Body of pancreas (tissue), 4 donors: ENCODE measurements at regions of chr18 and their contacts with region 1.

Region 1: DNA sequence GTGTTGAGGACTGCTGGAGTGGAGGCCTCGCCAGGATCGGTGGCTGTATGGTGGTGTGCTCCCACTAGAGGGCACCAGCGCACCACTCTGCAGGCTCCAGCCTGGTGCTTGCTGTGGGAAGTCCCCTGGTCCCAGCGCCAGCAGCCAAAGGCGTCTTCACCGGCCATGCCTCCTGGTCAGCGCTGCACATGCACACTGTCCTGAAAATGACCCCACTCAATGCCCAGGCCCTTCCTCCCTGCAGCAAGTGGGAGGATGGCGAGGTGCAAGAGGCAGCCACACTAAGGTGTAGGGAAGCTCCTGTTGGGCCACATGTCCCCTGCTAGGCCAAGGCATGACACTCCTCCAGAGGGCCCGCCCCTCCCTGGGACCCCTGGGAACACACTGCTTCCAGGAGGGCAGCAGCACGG is 136.5 kb downstream of the CTIF start:
- DNase-seq: peak; percentile 86 to 89 (median 87)
- ATAC-seq: peak; percentile 92
- H3K4me3 ChIP-seq: no peak overlapping the region
- H3K27ac ChIP-seq: no peak overlapping the region
- H3K4me1 ChIP-seq: peaks cover 4% of the 10 kb centered on the region
- H3K27me3 ChIP-seq: no peaks in the 10 kb centered on the region
- CTCF ChIP-seq: peak; percentile 81 to 95 (median 92)
- POLR2A ChIP-seq: no peak

Region 2: GRCh38 chr18:48161911-48162698 is 513.3 kb before region 1 on chr18:
- intact Hi-C with region 1: no loop called
- DNase-seq: peak in 2 of 4 donors; percentile 71 to 78
- ATAC-seq: peak; percentile 59
- H3K4me3 ChIP-seq: peak overlapping the region; percentile 12 to 42
- H3K27ac ChIP-seq: peak overlapping the region; percentile 79 to 88 (median 84)
- H3K4me1 ChIP-seq: peaks cover 40% of the 10 kb centered on the region
- H3K27me3 ChIP-seq: no peaks in the 10 kb centered on the region
- CTCF ChIP-seq: no peak
- POLR2A ChIP-seq: no peak

Region 3: GRCh38 chr18:49400398-49401072 is 725.2 kb after region 1 on chr18:
- intact Hi-C with region 1: loop called (anchors 10 kb)
- DNase-seq: peak in 1 of 4 donors; percentile 6
- ATAC-seq: peak; percentile 62
- H3K4me3 ChIP-seq: no peak overlapping the region
- H3K27ac ChIP-seq: peak overlapping the region in 3 of 4 donors; percentile 18 to 63 (median 48)
- H3K4me1 ChIP-seq: peaks cover 14% of the 10 kb centered on the region
- H3K27me3 ChIP-seq: no peaks in the 10 kb centered on the region
- CTCF ChIP-seq: no peak
- POLR2A ChIP-seq: no peak

Region 4: GRCh38 chr18:49878567-49879270 is 1203.4 kb after region 1 on chr18:
- intact Hi-C with region 1: no loop called
- DNase-seq: no peak
- ATAC-seq: no peak
- H3K4me3 ChIP-seq: no peak overlapping the region
- H3K27ac ChIP-seq: no peak overlapping the region
- H3K4me1 ChIP-seq: no peaks in the 10 kb centered on the region
- H3K27me3 ChIP-seq: no peaks in the 10 kb centered on the region
- CTCF ChIP-seq: no peak
- POLR2A ChIP-seq: no peak